ENCODE measurements at regions of chr2 and their contacts with region 1.

Region 1: DNA sequence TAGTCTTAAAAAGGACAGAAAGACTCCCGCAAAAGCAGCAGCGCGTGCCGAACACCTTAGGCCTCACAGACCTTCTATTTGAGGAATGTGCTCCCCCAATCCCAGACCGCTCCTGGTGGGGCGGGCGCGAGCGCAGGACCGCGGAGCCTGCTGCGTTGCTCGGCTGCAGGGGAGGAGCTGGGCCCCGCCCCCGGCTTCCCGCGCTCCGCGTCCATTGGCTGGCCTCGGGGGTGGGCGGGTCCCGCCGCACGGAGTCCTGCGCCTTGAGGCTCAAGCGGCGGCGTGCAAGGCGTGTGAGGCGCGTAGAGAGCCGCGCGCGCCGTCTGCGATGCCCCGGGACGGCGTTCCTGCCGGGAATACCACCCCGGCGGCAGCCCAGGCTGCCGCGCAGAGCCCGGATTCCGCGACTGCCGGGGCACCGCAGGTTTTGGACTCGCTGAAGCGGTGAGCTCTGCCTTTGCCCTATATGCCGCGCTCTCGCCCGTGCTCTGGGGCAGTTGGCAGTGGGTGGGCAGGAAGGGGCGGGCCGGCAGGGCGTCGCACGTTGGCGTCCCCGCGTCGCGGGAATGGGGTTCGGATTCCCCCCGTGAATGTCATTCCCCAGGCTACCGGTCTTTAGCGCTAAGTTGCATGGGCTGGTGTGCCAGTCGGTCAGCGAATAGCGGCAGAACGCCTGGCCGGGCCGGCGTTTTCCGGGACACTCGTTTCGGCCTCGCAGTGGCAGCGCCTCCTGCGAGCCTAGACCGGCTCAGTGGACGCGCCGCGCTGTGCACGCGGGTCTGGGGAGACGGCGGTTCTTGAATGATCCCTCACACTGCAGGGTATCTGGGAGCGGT is 49.6 kb upstream of the PAIP2B start:
- DNase-seq: peak; percentile 95
- ATAC-seq: peak; percentile 97

Region 2: GRCh38 chr2:71226965-71227560 is 49.5 kb before region 1 on chr2 and contains the start of gene PAIP2B:
- intact Hi-C with region 1: loop called (anchors 5 kb)
- DNase-seq: peak; percentile 99
- ATAC-seq: peak; percentile 93
- total RNA-seq, gene PAIP2B: 69.7 TPM

Region 3: DNA sequence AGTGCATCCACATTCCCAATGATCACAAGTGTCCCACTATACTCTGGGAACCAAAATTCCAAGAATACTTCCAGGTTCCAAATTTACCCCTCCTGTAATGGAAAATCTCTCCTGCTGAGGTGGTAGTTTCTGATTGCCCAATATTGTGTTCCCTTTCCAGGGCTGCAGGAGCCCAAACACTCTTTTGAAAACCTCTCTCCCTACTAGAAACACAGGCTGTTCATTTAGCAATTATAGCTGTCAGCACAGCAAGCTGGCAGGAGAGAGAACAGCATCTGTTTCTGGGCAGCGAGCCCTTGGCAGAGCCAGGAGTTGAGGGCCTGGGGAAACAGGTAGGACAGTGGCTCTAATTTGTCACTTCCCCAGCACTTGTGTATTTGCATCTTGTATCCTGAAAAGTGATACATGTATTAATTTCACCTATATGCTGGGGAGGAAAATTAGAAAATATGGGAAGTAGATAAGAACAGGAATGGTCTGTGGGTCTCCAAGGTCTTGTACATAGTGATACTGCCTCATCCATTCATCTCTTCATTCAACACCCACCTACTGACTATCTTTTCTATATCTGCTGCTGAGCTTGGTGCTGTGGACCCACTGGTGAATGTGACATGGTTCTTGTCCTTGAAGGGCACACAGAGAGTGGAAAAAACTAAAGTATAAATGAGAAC is 32.8 kb before region 1 on chr2:
- intact Hi-C with region 1: loop called (anchors 5 kb)
- DNase-seq: peak; percentile 64
- ATAC-seq: peak; percentile 94